B cell (primary cell): ENCODE measurements at regions of chr17 and their contacts with region 1.

Region 1: DNA sequence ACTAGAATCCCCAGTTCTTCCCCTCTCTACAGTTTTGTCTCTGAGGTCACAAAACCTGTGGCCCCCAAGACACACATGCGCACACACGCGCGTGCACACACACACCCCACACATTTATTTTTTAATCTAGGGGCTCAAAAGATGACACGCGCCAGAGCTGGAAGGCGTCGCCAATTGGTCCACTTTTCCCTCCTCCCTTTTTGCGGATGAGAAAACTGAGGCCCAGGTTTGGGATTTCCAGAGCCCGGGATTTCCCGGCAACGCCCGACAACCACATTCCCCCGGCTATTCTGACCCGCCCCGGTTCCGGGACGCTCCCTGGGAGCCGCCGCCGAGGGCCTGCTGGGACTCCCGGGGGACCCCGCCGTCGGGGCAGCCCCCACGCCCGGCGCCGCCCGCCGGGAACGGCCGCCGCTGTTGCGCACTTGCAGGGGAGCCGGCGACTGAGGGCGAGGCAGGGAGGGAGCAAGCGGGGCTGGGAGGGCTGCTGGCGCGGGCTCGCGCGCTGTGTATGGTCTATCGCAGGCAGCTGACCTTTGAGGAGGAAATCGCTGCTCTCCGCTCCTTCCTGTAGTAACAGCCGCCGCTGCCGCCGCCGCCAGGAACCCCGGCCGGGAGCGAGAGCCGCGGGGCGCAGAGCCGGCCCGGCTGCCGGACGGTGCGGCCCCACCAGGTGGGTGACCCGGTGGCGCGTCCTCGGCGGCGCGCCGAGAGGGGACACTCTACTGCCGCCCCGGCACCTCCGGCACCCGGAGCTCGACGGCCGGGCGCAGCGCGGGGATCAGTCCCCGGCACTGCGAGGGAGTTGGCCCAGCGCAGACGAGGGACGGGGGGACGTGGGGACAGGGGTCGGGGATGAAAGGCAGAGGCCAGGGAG is at the start of gene STAT5A:
- DNase-seq: peak; percentile 87
- ATAC-seq: peak; percentile 83
- H3K4me3 ChIP-seq: peak within 1 kb of the TSS; percentile 62 to 93 (median 73)
- H3K4me3 Mint-ChIP-seq: peak within 1 kb of the TSS; percentile 97
- H3K27ac ChIP-seq: peak within 1 kb of the TSS; percentile 75 to 89
- H3K27ac Mint-ChIP-seq: peak within 1 kb of the TSS; percentile 91
- H3K4me1 ChIP-seq: peaks cover 24 to 36% of the 10 kb centered on the region in 2 donors
- H3K4me1 Mint-ChIP-seq: peaks cover 41% of the 10 kb centered on the region
- H3K27me3 ChIP-seq: no peaks in the 10 kb centered on the region
- H3K27me3 Mint-ChIP-seq: no peaks in the 10 kb centered on the region
- CTCF ChIP-seq: no peak
- total RNA-seq, gene STAT5A: 104 and 110 TPM in 2 replicates

Region 2: GRCh38 chr17:42221937-42222745 is 66.0 kb before region 1 on chr17:
- CTCF ChIA-PET with region 1: interaction called, 16 read pairs
- POLR2A ChIA-PET with region 1: no interaction called
- intact Hi-C with region 1: no loop called
- DNase-seq: peak; percentile 65
- ATAC-seq: peak; percentile 64
- H3K4me3 ChIP-seq: no peak overlapping the region
- H3K4me3 Mint-ChIP-seq: no peak overlapping the region
- H3K27ac ChIP-seq: no peak overlapping the region
- H3K27ac Mint-ChIP-seq: no peak overlapping the region
- H3K4me1 ChIP-seq: no peaks in the 10 kb centered on the region
- H3K4me1 Mint-ChIP-seq: no peaks in the 10 kb centered on the region
- H3K27me3 ChIP-seq: no peaks in the 10 kb centered on the region
- H3K27me3 Mint-ChIP-seq: no peaks in the 10 kb centered on the region
- CTCF ChIP-seq: peak; percentile 66

Region 3: DNA sequence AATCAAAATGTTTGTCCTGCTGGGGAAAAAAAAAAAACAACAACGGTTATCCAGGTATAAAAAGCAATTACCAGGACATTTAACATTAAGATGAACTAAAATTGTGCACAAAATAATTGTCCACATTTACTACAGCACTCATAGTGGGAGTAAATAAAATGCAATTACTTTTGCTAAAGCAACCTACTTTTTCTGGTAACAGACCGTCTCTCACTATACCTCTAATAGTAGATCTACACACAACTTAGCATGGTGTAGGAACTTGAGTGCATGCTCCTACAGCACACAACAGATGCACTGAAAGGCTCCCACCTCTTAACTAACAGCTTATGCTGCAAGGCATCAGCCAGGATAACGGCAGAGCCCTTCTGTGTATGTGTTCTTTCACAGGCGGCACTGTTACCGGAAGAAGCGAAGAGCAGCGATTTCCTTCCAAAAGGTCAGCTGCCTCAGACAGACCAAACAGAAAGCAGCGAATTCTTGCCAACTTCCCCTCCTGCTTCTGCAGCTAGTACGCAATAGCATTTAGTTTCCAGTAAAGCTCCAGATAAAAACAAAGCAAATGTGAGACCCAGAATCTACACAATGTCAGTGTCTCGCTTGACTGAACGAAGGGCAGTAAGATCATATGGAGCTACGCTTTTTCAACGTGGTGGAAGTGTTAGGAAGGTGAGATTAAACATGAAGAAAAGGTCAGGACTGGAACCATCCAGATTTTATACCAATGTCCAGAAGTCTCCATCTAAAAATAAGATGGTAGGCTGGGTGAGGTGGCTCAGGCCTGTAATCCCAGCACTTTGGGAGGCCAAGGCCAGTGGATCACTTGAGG is 39.6 kb before region 1 on chr17:
- CTCF ChIA-PET with region 1: interaction called, 18 read pairs
- POLR2A ChIA-PET with region 1: interaction called, 8 read pairs
- intact Hi-C with region 1: loop called (anchors 2 kb)
- DNase-seq: peak; percentile 87
- ATAC-seq: peak; percentile 97
- H3K4me3 ChIP-seq: peak overlapping the region; percentile 39 to 86 (median 61)
- H3K4me3 Mint-ChIP-seq: peak overlapping the region; percentile 88
- H3K27ac ChIP-seq: peak overlapping the region; percentile 84 to 93
- H3K27ac Mint-ChIP-seq: peak overlapping the region; percentile 95
- H3K4me1 ChIP-seq: peaks cover 20 to 24% of the 10 kb centered on the region in 2 donors
- H3K4me1 Mint-ChIP-seq: peaks cover 47% of the 10 kb centered on the region
- H3K27me3 ChIP-seq: no peaks in the 10 kb centered on the region
- H3K27me3 Mint-ChIP-seq: no peaks in the 10 kb centered on the region
- CTCF ChIP-seq: no peak

Region 4: GRCh38 chr17:42276359-42276608 is 11.9 kb before region 1 on chr17 and contains the start of gene STAT5B:
- CTCF ChIA-PET with region 1: interaction called, 4 read pairs
- POLR2A ChIA-PET with region 1: interaction called, 11 read pairs
- intact Hi-C with region 1: loop called (anchors 1 kb)
- DNase-seq: peak; percentile 88
- ATAC-seq: peak; percentile 84
- H3K4me3 ChIP-seq: peak within 1 kb of the TSS; percentile 73 to 86 (median 75)
- H3K4me3 Mint-ChIP-seq: peak within 1 kb of the TSS; percentile 91
- H3K27ac ChIP-seq: peak within 1 kb of the TSS; percentile 41 to 79
- H3K27ac Mint-ChIP-seq: peak within 1 kb of the TSS; percentile 88
- H3K4me1 ChIP-seq: peaks cover 37 to 40% of the 10 kb centered on the region in 2 donors
- H3K4me1 Mint-ChIP-seq: peaks cover 52% of the 10 kb centered on the region
- H3K27me3 ChIP-seq: no peaks in the 10 kb centered on the region
- H3K27me3 Mint-ChIP-seq: no peaks in the 10 kb centered on the region
- CTCF ChIP-seq: no peak
- total RNA-seq, gene STAT5B: 95.7 and 103 TPM in 2 replicates

Region 5: GRCh38 chr17:42312285-42313130 is 24.3 kb after region 1 on chr17:
- CTCF ChIA-PET with region 1: interaction called, 6 read pairs
- POLR2A ChIA-PET with region 1: interaction called, 7 read pairs
- intact Hi-C with region 1: loop called (anchors 2 kb)
- DNase-seq: peak; percentile 87
- ATAC-seq: peak; percentile 72
- H3K4me3 ChIP-seq: peak overlapping the region in 4 of 5 experiments; percentile 29 to 64 (median 44)
- H3K4me3 Mint-ChIP-seq: peak overlapping the region; percentile 66
- H3K27ac ChIP-seq: no peak overlapping the region
- H3K27ac Mint-ChIP-seq: no peak overlapping the region
- H3K4me1 ChIP-seq: peaks cover 44 to 52% of the 10 kb centered on the region in 2 donors
- H3K4me1 Mint-ChIP-seq: peaks cover 51% of the 10 kb centered on the region
- H3K27me3 ChIP-seq: no peaks in the 10 kb centered on the region
- H3K27me3 Mint-ChIP-seq: no peaks in the 10 kb centered on the region
- CTCF ChIP-seq: peak; percentile 76

Region 6: GRCh38 chr17:42441371-42442195 is 153.4 kb after region 1 on chr17:
- CTCF ChIA-PET with region 1: no interaction called
- POLR2A ChIA-PET with region 1: no interaction called
- intact Hi-C with region 1: no loop called
- DNase-seq: no peak
- ATAC-seq: no peak
- H3K4me3 ChIP-seq: no peak overlapping the region
- H3K4me3 Mint-ChIP-seq: no peak overlapping the region
- H3K27ac ChIP-seq: no peak overlapping the region
- H3K27ac Mint-ChIP-seq: no peak overlapping the region
- H3K4me1 ChIP-seq: peaks cover 7 to 10% of the 10 kb centered on the region in 2 donors
- H3K4me1 Mint-ChIP-seq: peaks cover 20% of the 10 kb centered on the region
- H3K27me3 ChIP-seq: no peaks in the 10 kb centered on the region
- H3K27me3 Mint-ChIP-seq: no peaks in the 10 kb centered on the region
- CTCF ChIP-seq: no peak